ENCODE measurements at regions of chr2 and their contacts with region 1.

Region 1: DNA sequence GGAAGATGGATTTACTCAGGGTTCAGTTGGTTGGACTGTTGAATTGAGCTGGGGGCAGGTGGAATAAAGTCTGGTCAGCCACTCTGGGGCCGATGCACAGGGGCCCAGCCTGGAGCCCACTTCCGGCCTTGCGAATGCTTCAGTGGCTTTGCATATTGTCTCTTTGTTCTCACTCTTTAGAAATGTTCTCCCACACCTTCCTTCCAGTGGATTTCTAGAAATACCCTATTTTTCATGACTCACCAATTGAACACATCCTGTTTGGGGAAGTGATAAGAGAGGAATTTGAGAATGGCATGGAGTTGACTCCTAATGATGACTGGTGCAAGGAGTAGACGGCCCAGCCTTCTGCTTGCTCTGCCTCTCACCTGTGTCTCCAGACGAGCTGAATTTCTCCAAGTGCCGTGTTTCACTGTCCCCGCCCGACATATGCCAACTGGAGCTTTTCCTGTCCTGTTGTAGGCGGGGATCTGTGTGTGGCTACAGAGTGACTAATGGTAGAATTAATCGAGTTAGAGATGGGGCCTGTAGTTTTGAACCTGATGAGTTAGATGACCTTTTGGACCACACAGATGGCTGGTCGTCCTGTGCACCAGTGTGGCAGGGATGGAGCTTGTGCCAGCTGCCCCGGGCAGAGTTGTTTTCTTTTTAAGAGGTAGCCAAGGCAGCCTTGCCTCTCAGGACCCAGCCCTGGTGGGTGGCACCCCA is 28.2 kb downstream of the ASAP2 start:
- DNase-seq: peak in 1 of 2 donors; percentile 82
- H3K4me3 ChIP-seq: peak overlapping the region in 1 of 2 donors; percentile 36
- H3K27ac ChIP-seq: peak overlapping the region; percentile 92 to 97
- H3K4me1 ChIP-seq: peaks cover 37 to 97% of the 10 kb centered on the region in 2 donors
- H3K27me3 ChIP-seq: no peaks in the 10 kb centered on the region
- CTCF ChIP-seq: no peak

Region 2: GRCh38 chr2:8847400-8847799 is 387.4 kb before region 1 on chr2:
- intact Hi-C with region 1: no loop called
- DNase-seq: no peak
- H3K4me3 ChIP-seq: no peak overlapping the region
- H3K27ac ChIP-seq: no peak overlapping the region
- H3K4me1 ChIP-seq: no peaks in the 10 kb centered on the region
- H3K27me3 ChIP-seq: no peaks in the 10 kb centered on the region
- CTCF ChIP-seq: no peak

Region 3: GRCh38 chr2:9215680-9216079 is 19.2 kb before region 1 on chr2:
- intact Hi-C with region 1: loop called (anchors 2 kb)
- DNase-seq: peak in 1 of 2 donors; percentile 53
- H3K4me3 ChIP-seq: no peak overlapping the region
- H3K27ac ChIP-seq: no peak overlapping the region
- H3K4me1 ChIP-seq: peaks cover 17 to 66% of the 10 kb centered on the region in 2 donors
- H3K27me3 ChIP-seq: no peaks in the 10 kb centered on the region
- CTCF ChIP-seq: no peak

Region 4: DNA sequence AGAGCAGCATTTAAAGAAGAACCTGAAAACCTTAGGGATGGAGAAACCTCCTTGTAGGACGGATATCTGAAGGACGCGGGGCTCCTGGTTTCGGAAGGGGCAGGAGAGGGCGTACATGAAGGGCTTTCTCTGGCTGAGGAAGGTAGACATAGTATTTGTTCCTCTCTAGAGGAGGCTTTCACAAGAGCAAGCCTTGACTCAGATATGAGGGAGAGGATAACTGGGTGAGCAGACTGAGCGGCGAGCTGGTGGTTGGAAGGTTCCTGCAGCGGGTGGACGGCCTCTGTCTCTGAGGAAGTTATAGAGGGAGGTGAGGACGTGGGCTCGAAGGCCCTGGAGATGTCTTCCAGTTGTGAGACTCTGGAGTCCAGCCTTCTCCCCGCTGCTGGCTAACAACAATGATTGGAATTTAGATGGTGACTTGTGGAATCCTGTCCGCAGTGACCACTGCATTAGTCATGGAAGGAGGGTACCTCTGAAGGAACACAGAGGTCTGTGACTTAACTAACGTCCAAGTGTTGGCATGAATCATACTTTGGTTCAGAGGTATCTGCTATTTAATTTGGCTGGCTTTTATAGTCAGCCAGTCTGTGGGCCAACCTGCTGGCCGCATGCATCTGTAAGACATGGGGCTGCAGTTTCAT is 52.7 kb after region 1 on chr2:
- intact Hi-C with region 1: loop called (anchors 1 kb)
- DNase-seq: peak in 1 of 2 donors; percentile 86
- H3K4me3 ChIP-seq: no peak overlapping the region
- H3K27ac ChIP-seq: peak overlapping the region; percentile 74 to 76
- H3K4me1 ChIP-seq: peaks cover 11 to 39% of the 10 kb centered on the region in 2 donors
- H3K27me3 ChIP-seq: no peaks in the 10 kb centered on the region
- CTCF ChIP-seq: no peak

Region 5: DNA sequence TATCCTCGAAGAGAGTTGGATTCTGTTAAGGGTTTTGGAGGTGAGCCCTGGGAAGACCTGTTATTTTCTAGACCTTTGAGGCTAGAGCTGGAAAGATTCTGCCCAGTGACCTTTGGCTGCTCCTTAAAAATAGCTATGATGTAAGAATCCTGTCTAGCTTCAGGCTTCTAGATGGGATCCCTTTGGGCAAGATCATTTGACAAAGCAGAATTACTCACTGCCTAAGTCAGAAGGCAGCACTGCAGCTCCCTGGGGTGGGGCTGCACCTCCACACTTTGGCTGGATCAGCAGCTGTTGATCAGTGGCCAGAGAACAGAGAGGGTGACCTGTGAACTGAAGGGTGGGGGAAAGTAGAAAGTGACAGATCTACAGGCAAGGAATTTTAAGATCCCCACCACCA is 75.5 kb after region 1 on chr2:
- intact Hi-C with region 1: loop called (anchors 2 kb)
- DNase-seq: peak; percentile 35 to 84
- H3K4me3 ChIP-seq: no peak overlapping the region
- H3K27ac ChIP-seq: peak overlapping the region; percentile 77 to 80
- H3K4me1 ChIP-seq: peaks cover 10 to 57% of the 10 kb centered on the region in 2 donors
- H3K27me3 ChIP-seq: no peaks in the 10 kb centered on the region
- CTCF ChIP-seq: no peak